ENCODE measurements at regions of chr9 and their contacts with region 1.

Region 1: DNA sequence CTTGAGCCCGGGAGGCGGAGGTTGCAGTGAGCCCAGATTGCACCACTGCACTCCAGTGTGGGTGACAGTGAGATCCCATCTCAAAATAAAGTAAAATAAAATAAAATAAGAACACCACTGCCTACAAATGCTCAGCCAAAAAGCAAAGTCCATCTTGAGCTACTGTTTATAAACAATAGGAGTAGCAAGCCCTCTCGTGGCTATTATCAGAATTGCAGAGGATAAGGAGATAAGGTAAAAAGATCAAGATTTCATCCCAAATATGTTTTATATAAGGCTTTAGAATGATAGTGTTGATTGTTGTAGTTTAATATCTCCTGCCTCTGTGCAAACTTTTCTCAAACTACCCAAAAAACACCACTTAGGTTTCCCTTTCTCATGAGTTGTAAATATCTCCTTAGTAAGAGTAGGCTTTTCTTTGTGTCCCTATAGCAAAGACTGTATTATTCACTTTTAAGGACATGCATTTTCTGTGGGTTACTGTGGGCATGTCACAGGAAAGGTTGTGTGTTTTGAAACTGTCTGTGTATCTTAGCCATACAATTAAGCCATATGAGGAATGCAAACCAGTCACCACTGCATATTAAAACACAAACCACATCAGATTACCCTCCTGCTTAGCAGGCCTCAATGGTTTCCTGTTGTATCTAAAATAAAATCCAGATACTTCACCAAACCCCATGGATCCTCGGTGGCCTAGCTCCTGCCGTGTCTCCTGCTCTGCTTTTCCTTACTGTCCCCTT is 31.8 kb upstream of the CKS2 start:
- DNase-seq: no peak
- ATAC-seq: peak; percentile 48; the same call in 1 of the 2 replicates
- H3K4me3 Mint-ChIP-seq: no peak overlapping the region
- H3K27ac Mint-ChIP-seq: no peak overlapping the region
- H3K4me1 Mint-ChIP-seq: peaks cover 7% of the 10 kb centered on the region
- H3K27me3 Mint-ChIP-seq: peaks cover 4% of the 10 kb centered on the region
- CTCF ChIP-seq: peak; percentile 50

Region 2: DNA sequence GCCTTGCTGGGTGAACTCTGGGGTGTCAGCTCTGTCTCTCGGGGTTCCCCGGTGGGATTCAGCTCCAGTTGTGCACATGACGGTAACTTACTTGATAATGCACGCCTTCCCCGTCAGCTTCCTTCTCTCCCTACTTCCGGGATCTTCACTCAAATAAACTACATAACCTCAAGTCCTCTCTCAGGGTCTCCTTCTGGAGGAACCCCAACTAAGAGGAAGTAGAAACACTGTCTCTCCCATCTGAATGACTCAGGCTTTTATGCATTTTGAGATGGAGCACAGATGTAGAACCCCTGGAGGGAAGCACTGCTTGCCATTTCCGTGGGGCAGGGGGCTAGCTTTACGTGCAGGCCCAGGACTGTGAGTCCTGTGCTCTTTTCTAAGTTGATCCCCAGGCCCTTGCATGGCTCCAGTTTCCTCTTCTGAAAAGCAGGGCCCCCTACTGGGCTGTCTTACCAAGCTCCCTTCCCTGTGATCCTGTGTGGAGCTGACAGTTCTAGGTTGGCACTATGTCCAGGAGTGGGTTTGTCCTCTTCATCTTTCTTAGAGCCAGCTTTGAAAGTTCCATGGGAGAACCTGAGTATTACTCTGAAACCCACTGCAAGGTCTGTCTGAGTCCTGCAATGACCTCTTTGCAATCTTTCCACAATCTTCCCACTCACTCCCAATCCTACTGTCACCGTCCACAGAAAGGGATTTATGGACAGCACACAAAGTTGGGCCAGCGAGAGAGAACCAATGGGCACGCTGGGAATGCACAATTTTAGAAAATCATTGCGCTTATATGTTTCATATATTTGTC is 270.2 kb before region 1 on chr9:
- CTCF ChIA-PET with region 1: interaction called, 11 read pairs
- POLR2A ChIA-PET with region 1: no interaction called
- DNase-seq: no peak
- ATAC-seq: peak; percentile 11; the same call in 1 of the 2 replicates
- H3K4me3 Mint-ChIP-seq: no peak overlapping the region
- H3K27ac Mint-ChIP-seq: peak overlapping the region; percentile 6; the same call in 1 of the 2 replicates
- H3K4me1 Mint-ChIP-seq: peaks cover 36% of the 10 kb centered on the region
- H3K27me3 Mint-ChIP-seq: no peaks in the 10 kb centered on the region
- CTCF ChIP-seq: no peak

Region 3: DNA sequence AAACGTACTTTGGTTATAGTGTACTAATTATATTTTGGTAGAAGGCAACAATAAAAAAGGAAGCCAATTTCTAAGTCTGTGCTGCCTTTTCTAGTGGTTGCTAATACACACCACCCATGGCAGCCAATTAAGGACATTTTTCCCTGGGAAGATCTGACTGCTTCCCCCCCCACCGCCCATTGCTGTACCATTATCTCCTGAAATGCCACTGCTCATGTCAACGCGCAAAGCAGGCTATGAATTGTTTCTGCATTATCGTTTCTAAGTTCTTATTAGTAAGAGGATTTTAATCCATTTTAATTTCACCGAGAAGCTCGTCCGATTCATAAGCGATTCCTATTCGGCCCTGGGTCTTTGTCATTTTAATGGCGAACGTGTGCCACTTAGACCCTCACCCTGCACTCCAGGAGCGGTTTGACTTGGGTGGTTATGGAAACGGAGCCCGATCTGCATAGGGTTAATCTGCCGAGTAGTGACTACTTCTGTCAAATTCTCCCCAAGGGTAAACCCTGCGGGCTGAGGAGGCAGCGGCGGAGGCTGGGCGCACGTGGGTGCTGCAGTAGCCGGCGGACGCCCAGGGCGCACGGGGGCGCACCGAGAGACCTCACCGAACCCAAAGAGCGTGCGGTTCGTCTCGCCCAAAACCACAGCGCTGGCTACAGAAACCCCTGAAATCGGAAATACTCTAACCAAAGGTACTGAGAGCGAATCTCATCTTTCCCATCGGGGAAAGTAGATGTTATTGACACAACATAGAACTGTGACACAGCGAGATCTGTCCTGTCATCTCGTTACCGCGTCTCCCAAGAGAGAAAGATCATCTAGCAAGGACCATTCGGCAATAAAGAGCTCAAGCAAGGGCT is 44.7 kb before region 1 on chr9:
- CTCF ChIA-PET with region 1: interaction called, 13 read pairs
- POLR2A ChIA-PET with region 1: no interaction called
- DNase-seq: peak; percentile 58
- ATAC-seq: peak; percentile 92
- H3K4me3 Mint-ChIP-seq: peak overlapping the region; percentile 74
- H3K27ac Mint-ChIP-seq: no peak overlapping the region
- H3K4me1 Mint-ChIP-seq: peaks cover 16% of the 10 kb centered on the region
- H3K27me3 Mint-ChIP-seq: peaks cover 24% of the 10 kb centered on the region
- CTCF ChIP-seq: no peak

Region 4: GRCh38 chr9:89358985-89359384 is 79.8 kb after region 1 on chr9:
- CTCF ChIA-PET with region 1: no interaction called
- POLR2A ChIA-PET with region 1: no interaction called
- DNase-seq: no peak
- ATAC-seq: no peak
- H3K4me3 Mint-ChIP-seq: no peak overlapping the region
- H3K27ac Mint-ChIP-seq: no peak overlapping the region
- H3K4me1 Mint-ChIP-seq: no peaks in the 10 kb centered on the region
- H3K27me3 Mint-ChIP-seq: no peaks in the 10 kb centered on the region
- CTCF ChIP-seq: no peak